Heart right ventricle (tissue), 16 donors: ENCODE measurements at regions of chr1 and their contacts with region 1.

Region 1: GRCh38 chr1:201229771-201230635 is 39.4 kb downstream of the IGFN1 start:
- DNase-seq: no peak
- ATAC-seq: no peak
- H3K4me3 ChIP-seq: no peak overlapping the region
- H3K27ac ChIP-seq: no peak overlapping the region
- H3K4me1 ChIP-seq: no peaks in the 10 kb centered on the region
- H3K27me3 ChIP-seq: peaks cover 0 to 13% (median 0%) of the 10 kb centered on the region in 7 donors
- CTCF ChIP-seq: no peak

Region 2: DNA sequence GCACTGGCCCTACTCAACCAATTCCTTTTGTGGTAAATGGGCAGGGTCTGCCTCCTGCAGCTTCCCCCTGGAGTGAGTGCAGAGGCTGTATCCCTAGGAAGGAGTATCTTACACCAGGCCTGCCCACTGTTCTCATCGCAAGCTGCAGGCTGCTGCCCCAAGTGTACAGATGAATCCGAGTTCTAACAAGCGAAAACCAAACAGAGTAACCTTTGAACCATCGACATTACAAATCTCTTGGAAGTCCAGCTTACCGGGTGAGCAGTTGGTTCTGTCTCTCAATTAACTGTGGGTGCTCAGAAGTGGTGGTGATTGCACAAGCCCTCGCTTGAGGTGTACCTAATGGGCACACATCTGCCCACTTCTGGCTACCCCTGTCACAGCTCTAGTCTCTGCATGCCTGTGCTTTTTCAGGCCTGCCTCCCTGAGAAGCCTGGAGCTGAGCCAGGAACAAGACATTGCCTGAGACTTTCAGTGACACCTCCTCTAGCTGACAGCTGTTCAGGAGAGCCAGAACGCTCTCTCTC is 312.6 kb before region 1 on chr1:
- intact Hi-C with region 1: no loop called
- DNase-seq: peak in 1 of 2 donors; percentile 75
- ATAC-seq: peak; percentile 70 to 91 (median 82)
- H3K4me3 ChIP-seq: no peak overlapping the region
- H3K27ac ChIP-seq: no peak overlapping the region
- H3K4me1 ChIP-seq: peaks cover 0 to 8% (median 0%) of the 10 kb centered on the region in 9 donors
- H3K27me3 ChIP-seq: peaks cover 0 to 3% (median 0%) of the 10 kb centered on the region in 7 donors
- CTCF ChIP-seq: no peak

Region 3: DNA sequence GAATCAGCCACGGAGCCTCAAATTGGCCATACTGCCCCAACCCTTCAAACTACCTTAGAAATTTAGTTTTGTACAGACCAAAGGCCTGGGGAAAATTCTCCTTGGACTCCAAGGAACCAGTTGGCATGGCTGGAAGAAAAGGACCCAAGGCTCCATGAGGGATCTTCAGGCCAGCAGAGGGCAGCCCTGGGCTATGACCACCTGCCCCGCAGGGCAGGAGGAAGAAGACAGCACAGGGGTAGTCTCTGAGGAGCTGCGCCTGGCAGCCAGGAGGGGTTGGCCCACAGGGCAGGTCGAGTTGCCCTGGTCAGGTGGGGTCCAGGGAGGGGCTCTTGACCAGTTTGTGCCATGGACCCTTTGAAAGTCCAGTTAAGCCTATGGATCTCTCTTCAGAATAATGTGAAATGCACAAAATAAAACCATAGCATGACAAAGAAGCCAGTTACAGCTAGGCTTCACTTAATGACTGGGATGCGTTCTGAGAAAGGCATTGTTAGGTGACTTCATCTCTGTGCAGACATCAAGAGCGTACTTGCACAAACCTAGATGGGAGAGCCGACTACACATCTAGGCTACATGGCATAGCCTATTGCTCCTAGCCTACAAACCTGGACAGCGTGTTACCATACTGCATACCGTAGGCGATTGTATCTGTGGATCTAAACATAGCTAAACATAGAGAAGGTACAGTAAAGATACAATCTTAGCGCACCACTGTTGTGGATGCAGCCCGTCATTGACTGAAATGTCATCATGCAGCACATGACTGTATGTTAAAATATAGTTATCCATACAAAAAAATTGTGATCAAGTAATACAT is 143.9 kb before region 1 on chr1:
- intact Hi-C with region 1: loop called in 1 of 10 experiments (anchors 10 kb)
- DNase-seq: peak; percentile 17 to 44
- ATAC-seq: peak; percentile 49 to 76 (median 63)
- H3K4me3 ChIP-seq: no peak overlapping the region
- H3K27ac ChIP-seq: no peak overlapping the region
- H3K4me1 ChIP-seq: peaks cover 0 to 5% (median 0%) of the 10 kb centered on the region in 9 donors
- H3K27me3 ChIP-seq: peaks cover 0 to 34% (median 5%) of the 10 kb centered on the region in 7 donors
- CTCF ChIP-seq: peak in 8 of 9 donors; percentile 14 to 61 (median 55)

Region 4: DNA sequence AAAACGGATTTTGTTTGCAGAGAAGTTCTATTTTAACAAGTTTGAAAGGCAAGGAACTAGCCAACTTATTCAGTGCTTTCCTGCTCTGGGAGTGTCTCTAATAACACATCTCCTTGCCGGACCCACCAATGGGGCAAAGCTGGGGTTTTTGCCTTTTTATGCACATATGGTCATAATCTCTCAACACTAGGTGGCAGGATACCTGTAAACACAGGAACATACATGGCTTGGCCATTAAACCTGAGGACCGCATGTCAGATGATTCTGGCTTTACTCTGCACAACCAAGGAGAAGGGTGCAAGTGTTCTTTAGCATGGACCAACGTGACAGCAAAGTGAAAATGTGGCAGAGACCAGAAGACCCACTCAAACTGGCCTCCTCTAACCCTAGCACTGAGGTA is 80.6 kb before region 1 on chr1:
- intact Hi-C with region 1: loop called in 1 of 10 experiments (anchors 10 kb)
- DNase-seq: no peak
- ATAC-seq: no peak
- H3K4me3 ChIP-seq: no peak overlapping the region
- H3K27ac ChIP-seq: no peak overlapping the region
- H3K4me1 ChIP-seq: peaks cover 0 to 14% (median 11%) of the 10 kb centered on the region in 9 donors
- H3K27me3 ChIP-seq: no peaks in the 10 kb centered on the region
- CTCF ChIP-seq: peak in 6 of 9 donors; percentile 12 to 38 (median 32)